Endothelial cell of umbilical vein (primary cell): ENCODE measurements at regions of chr5 and their contacts with region 1.

Region 1: GRCh38 chr5:154940772-154941620 is at the start of gene MRPL22:
- DNase-seq: peak; percentile 95
- H3K4me3 ChIP-seq: peak within 1 kb of the TSS; percentile 84 to 99 (median 91)
- H3K27ac ChIP-seq: peak within 1 kb of the TSS; percentile 81
- H3K4me1 ChIP-seq: peaks cover 56% of the 10 kb centered on the region
- H3K27me3 ChIP-seq: no peaks in the 10 kb centered on the region
- CTCF ChIP-seq: no peak
- POLR2A ChIP-seq: peak; percentile 86
- total RNA-seq, gene MRPL22: 90.8 and 112 TPM in 2 replicates

Region 2: DNA sequence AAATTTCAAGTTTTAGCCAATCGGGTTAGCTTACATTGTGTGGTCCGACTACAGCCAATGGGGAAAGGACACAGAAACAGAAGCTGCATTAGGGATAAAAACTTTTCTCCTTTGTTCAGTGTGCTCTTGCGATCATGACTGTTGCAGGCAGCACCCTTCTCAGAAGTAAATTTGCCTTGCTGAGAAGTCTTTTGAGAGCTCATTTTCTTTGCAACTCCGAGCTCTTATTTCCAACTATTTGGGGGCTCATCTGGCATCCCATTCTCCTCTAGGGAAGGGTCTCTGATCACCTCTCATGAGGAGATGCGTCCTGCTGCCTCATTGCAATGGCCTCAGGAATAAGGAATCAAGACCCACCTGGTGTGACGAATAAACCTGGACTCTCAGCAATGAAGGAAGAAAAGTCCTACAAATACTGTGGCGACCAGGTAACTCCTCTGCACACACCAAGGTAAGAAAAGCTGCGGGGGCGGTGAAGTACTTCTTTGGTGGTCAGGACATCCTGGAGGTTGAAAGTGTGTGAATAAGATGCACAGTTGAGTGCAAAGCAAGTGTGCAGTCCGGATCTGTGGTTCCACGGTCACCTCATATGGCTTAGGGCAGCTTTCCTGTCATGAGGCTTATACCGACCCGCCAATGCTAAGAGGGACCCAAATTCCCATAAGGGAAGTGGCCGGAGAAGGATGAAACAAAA is 62.2 kb before region 1 on chr5:
- CTCF ChIA-PET with region 1: no interaction called
- POLR2A ChIA-PET with region 1: no interaction called
- dilution Hi-C with region 1: no loop called
- intact Hi-C with region 1: no loop called
- DNase-seq: no peak
- H3K4me3 ChIP-seq: no peak overlapping the region
- H3K27ac ChIP-seq: no peak overlapping the region
- H3K4me1 ChIP-seq: peaks cover 7% of the 10 kb centered on the region
- H3K27me3 ChIP-seq: no peaks in the 10 kb centered on the region
- CTCF ChIP-seq: no peak
- POLR2A ChIP-seq: no peak

Region 3: GRCh38 chr5:154995679-154996078 is 54.7 kb after region 1 on chr5:
- CTCF ChIA-PET with region 1: interaction called, 4 read pairs
- POLR2A ChIA-PET with region 1: no interaction called
- dilution Hi-C with region 1: no loop called
- intact Hi-C with region 1: loop called (anchors 2 kb)
- DNase-seq: peak; percentile 39
- H3K4me3 ChIP-seq: no peak overlapping the region
- H3K27ac ChIP-seq: no peak overlapping the region
- H3K4me1 ChIP-seq: peaks cover 15% of the 10 kb centered on the region
- H3K27me3 ChIP-seq: no peaks in the 10 kb centered on the region
- CTCF ChIP-seq: peak; percentile 16 to 36
- POLR2A ChIP-seq: no peak

Region 4: DNA sequence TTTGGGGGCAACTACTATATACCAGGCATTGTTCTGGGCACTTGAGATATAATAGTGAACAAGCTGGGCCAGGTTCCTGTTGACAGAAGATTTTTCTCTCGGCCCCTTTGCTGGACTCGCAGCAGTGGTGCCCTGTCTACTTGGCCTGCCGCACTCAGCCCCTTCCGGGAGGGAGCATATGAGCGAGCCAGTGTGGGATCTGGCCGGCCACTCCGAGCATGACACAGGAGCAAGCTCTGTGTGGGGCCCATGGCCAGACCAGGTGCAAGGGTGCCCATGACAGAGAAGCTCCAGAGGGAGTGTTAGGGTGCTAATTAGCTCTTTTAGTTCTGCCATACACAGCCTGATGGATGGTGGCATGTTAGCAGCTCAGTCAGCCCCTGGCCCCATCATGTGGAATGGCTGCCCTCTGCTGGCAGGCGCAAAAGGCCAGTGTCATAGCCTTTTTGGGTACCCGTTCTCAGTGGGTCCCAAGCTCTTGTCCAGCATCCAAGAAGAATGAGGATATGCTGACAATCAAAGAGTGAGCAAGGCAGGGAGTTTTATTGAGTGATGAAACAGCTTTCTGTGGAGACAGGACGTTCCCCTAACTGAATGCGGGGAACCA is 63.2 kb after region 1 on chr5:
- CTCF ChIA-PET with region 1: interaction called, 42 read pairs
- POLR2A ChIA-PET with region 1: no interaction called
- dilution Hi-C with region 1: no loop called
- intact Hi-C with region 1: loop called (anchors 1 kb)
- DNase-seq: peak; percentile 56
- H3K4me3 ChIP-seq: no peak overlapping the region
- H3K27ac ChIP-seq: no peak overlapping the region
- H3K4me1 ChIP-seq: peaks cover 4% of the 10 kb centered on the region
- H3K27me3 ChIP-seq: no peaks in the 10 kb centered on the region
- CTCF ChIP-seq: peak; percentile 60 to 73
- POLR2A ChIP-seq: no peak

Region 5: DNA sequence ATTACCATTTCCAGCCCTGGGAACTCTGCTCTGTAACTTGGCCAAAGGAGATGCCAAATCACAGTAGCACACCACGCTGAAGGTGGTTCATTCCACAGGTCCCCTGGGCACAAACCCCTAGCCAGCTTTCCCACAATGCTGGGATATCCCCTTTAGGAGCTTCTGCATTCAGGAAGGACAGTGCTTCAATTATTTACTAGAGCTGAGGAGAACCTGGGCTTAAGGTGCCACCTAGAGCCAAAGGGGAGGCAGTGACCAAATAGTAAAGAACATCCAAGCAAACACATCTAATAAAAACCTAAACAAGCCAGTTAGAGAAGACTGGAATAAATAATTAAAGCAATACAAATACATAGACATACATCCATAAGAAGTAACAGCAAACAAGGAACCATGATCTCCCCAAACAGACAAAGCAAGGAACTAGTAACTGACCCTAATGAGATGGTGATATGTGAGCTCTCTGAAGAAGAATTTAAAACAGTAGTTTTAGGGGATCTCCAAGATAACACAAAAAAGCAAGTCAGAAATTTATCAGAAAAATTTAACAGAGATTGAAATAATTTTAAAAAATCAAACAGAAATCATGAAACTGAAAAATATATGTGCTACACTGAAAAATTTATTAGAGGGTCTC is 87.1 kb after region 1 on chr5:
- CTCF ChIA-PET with region 1: interaction called, 61 read pairs
- POLR2A ChIA-PET with region 1: no interaction called
- dilution Hi-C with region 1: no loop called
- intact Hi-C with region 1: loop called (anchors 1 kb)
- DNase-seq: peak; percentile 20
- H3K4me3 ChIP-seq: no peak overlapping the region
- H3K27ac ChIP-seq: no peak overlapping the region
- H3K4me1 ChIP-seq: no peaks in the 10 kb centered on the region
- H3K27me3 ChIP-seq: no peaks in the 10 kb centered on the region
- CTCF ChIP-seq: peak; percentile 22 to 28
- POLR2A ChIP-seq: no peak

Region 6: GRCh38 chr5:155082401-155082800 is 141.4 kb after region 1 on chr5:
- CTCF ChIA-PET with region 1: no interaction called
- POLR2A ChIA-PET with region 1: no interaction called
- dilution Hi-C with region 1: no loop called
- intact Hi-C with region 1: no loop called
- DNase-seq: peak; percentile 63
- H3K4me3 ChIP-seq: no peak overlapping the region
- H3K27ac ChIP-seq: peak overlapping the region; percentile 60
- H3K4me1 ChIP-seq: peaks cover 17% of the 10 kb centered on the region
- H3K27me3 ChIP-seq: no peaks in the 10 kb centered on the region
- CTCF ChIP-seq: no peak
- POLR2A ChIP-seq: no peak

Region 7: DNA sequence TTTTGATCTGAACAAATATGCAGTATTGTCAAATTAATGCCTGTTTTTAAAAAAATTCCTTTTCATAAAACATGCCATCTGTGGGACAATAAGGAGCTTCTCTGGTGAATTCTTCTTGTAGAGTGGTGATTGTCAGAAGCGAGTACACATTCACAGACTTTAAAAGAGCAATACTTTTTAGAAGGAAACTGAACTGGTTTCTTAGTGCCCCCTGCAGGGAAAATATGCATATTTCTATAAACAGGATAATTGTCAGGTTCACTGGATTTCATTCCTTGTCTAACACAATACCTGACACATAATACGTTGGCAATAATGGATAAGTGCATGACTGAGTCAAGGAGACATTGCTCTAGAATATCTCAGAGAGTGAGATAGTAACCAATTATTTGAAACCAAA is 206.2 kb after region 1 on chr5:
- CTCF ChIA-PET with region 1: interaction called, 7 read pairs
- POLR2A ChIA-PET with region 1: no interaction called
- dilution Hi-C with region 1: no loop called
- intact Hi-C with region 1: loop called (anchors 1 kb)
- DNase-seq: peak; percentile 31
- H3K4me3 ChIP-seq: no peak overlapping the region
- H3K27ac ChIP-seq: no peak overlapping the region
- H3K4me1 ChIP-seq: no peaks in the 10 kb centered on the region
- H3K27me3 ChIP-seq: peaks cover 6 to 10% of the 10 kb centered on the region in 2 experiments
- CTCF ChIP-seq: no peak
- POLR2A ChIP-seq: no peak